Posterior vena cava (tissue), 2 donors: ENCODE measurements at regions of chr2 and their contacts with region 1.

Region 1: GRCh38 chr2:780002-780401 is 102.8 kb upstream of the TMEM18 start:
- DNase-seq: no peak

Region 2: GRCh38 chr2:833180-833579 is 53.2 kb after region 1 on chr2:
- intact Hi-C with region 1: no loop called
- DNase-seq: no peak

Region 3: GRCh38 chr2:2484296-2484695 is 1704.3 kb after region 1 on chr2:
- intact Hi-C with region 1: loop called in 1 of 2 experiments (anchors 5 kb)
- DNase-seq: no peak